ENCODE measurements at regions of chr2 and their contacts with region 1.

Region 1: DNA sequence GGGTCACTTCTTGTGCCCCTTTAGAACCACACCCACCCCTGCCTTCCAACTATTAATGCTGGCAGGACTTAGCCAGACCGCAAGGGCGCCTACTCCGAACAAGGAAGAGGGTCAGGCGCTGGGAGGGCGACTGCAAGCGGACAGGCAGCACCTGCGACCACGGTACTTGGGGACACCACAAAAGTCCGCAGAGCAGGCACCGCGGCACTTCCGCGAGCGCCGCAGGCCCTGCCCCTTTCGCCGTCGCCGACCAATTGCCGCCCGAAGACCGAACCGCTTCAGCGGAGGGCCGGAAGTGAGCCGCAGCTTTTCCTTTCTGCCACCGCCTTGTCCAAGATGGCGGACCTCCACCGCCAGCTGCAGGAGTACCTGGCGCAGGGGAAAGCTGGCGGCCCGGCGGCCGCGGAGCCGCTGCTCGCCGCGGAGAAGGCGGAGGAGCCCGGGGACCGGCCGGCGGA is at the start of gene SFT2D3:
- DNase-seq: peak; percentile 75
- ATAC-seq: peak; percentile 84
- H3K4me3 ChIP-seq: peak within 1 kb of the TSS; percentile 71
- H3K27ac ChIP-seq: peak within 1 kb of the TSS; percentile 99
- H3K4me1 ChIP-seq: peaks cover 9% of the 10 kb centered on the region
- H3K27me3 ChIP-seq: no peaks in the 10 kb centered on the region
- CTCF ChIP-seq: no peak
- EP300 ChIP-seq: no peak; a peak in 1 of 4 replicates
- POLR2A ChIP-seq: peak; percentile 97
- RAD21 ChIP-seq: no peak
- polyA plus RNA-seq, gene SFT2D3: not detected

Region 2: GRCh38 chr2:127526149-127527000 is 174.8 kb before region 1 on chr2 and contains the start of gene IWS1:
- CTCF ChIA-PET with region 1: no interaction called
- POLR2A ChIA-PET with region 1: interaction called, 3 read pairs
- RAD21 ChIA-PET with region 1: interaction called, 3 read pairs
- SMC1A ChIA-PET with region 1: no interaction called
- in situ Hi-C with region 1: no loop called
- intact Hi-C with region 1: loop called (anchors 5 kb)
- DNase-seq: peak; percentile 88
- ATAC-seq: peak; percentile 93
- H3K4me3 ChIP-seq: peak within 1 kb of the TSS; percentile 93
- H3K27ac ChIP-seq: peak within 1 kb of the TSS; percentile 83
- H3K4me1 ChIP-seq: no peaks in the 10 kb centered on the region
- H3K27me3 ChIP-seq: no peaks in the 10 kb centered on the region
- CTCF ChIP-seq: peak in 2 of 3 experiments; percentile 3 to 21; a peak in 1 of 6 replicates
- EP300 ChIP-seq: no peak
- POLR2A ChIP-seq: peak; percentile 91
- RAD21 ChIP-seq: no peak
- polyA plus RNA-seq, gene IWS1: 21.9 to 34.2 TPM

Region 3: GRCh38 chr2:127743477-127744026 is 42.3 kb after region 1 on chr2:
- CTCF ChIA-PET with region 1: interaction called, 3 read pairs
- POLR2A ChIA-PET with region 1: no interaction called
- RAD21 ChIA-PET with region 1: interaction called, 53 read pairs
- SMC1A ChIA-PET with region 1: interaction called, 17 read pairs
- in situ Hi-C with region 1: no loop called
- intact Hi-C with region 1: loop called (anchors 5 kb)
- DNase-seq: no peak
- ATAC-seq: peak; percentile 86
- H3K4me3 ChIP-seq: no peak overlapping the region
- H3K27ac ChIP-seq: no peak overlapping the region
- H3K4me1 ChIP-seq: no peaks in the 10 kb centered on the region; the same call in 1 of the 2 replicates
- H3K27me3 ChIP-seq: no peaks in the 10 kb centered on the region
- CTCF ChIP-seq: 0 out of 6 replicates have a peak, but pooled peaks of 1 of the 3 experiments have one; percentile 11
- EP300 ChIP-seq: peak; percentile 90 to 92; a peak in 3 of 4 replicates
- POLR2A ChIP-seq: no peak
- RAD21 ChIP-seq: no peak

Region 4: GRCh38 chr2:127805491-127805890 is 104.3 kb after region 1 on chr2:
- CTCF ChIA-PET with region 1: no interaction called
- POLR2A ChIA-PET with region 1: interaction called, 9 read pairs
- RAD21 ChIA-PET with region 1: interaction called, 20 read pairs
- SMC1A ChIA-PET with region 1: interaction called, 12 read pairs
- in situ Hi-C with region 1: no loop called
- intact Hi-C with region 1: no loop called
- DNase-seq: no peak
- ATAC-seq: no peak
- H3K4me3 ChIP-seq: no peak overlapping the region; the same call in 1 of the 2 replicates
- H3K27ac ChIP-seq: no peak overlapping the region
- H3K4me1 ChIP-seq: peaks cover 7% of the 10 kb centered on the region
- H3K27me3 ChIP-seq: no peaks in the 10 kb centered on the region
- CTCF ChIP-seq: no peak
- EP300 ChIP-seq: no peak
- POLR2A ChIP-seq: no peak
- RAD21 ChIP-seq: no peak

Region 5: GRCh38 chr2:127829845-127830246 is 128.6 kb after region 1 on chr2:
- CTCF ChIA-PET with region 1: interaction called, 3 read pairs
- POLR2A ChIA-PET with region 1: interaction called, 3 read pairs
- RAD21 ChIA-PET with region 1: no interaction called
- SMC1A ChIA-PET with region 1: interaction called, 9 read pairs
- in situ Hi-C with region 1: no loop called
- intact Hi-C with region 1: loop called (anchors 1 kb)
- DNase-seq: peak; percentile 96
- ATAC-seq: peak; percentile 94
- H3K4me3 ChIP-seq: peak overlapping the region; percentile 35; the same call in 1 of the 2 replicates
- H3K27ac ChIP-seq: peak overlapping the region; percentile 92
- H3K4me1 ChIP-seq: peaks cover 38% of the 10 kb centered on the region
- H3K27me3 ChIP-seq: no peaks in the 10 kb centered on the region
- CTCF ChIP-seq: no peak
- EP300 ChIP-seq: peak; percentile 92 to 94
- POLR2A ChIP-seq: no peak
- RAD21 ChIP-seq: no peak

Region 6: GRCh38 chr2:128027801-128028667 is 326.8 kb after region 1 on chr2 and contains the start of gene SAP130:
- CTCF ChIA-PET with region 1: no interaction called
- POLR2A ChIA-PET with region 1: no interaction called
- RAD21 ChIA-PET with region 1: no interaction called
- SMC1A ChIA-PET with region 1: no interaction called
- in situ Hi-C with region 1: no loop called
- intact Hi-C with region 1: loop called (anchors 5 kb)
- DNase-seq: peak; percentile 71
- ATAC-seq: peak; percentile 91
- H3K4me3 ChIP-seq: peak within 1 kb of the TSS; percentile 96
- H3K27ac ChIP-seq: peak within 1 kb of the TSS; percentile 73
- H3K4me1 ChIP-seq: 0 out of 2 replicates have a peak, but pooled peaks cover 3% of the 10 kb centered on the region
- H3K27me3 ChIP-seq: no peaks in the 10 kb centered on the region; a peak in 1 of 4 replicates
- CTCF ChIP-seq: no peak
- EP300 ChIP-seq: no peak
- POLR2A ChIP-seq: peak; percentile 87
- RAD21 ChIP-seq: no peak
- polyA plus RNA-seq, gene SAP130: 5.0 to 6.8 TPM

Measured in GM12878 (cell line).